Ascending aorta (tissue), 2 donors: ENCODE measurements at regions of chr13 and their contacts with region 1.

Region 1: GRCh38 chr13:97221989-97222700 is at the start of gene MBNL2:
- DNase-seq: peak; percentile 75 to 93
- H3K4me3 ChIP-seq: peak within 1 kb of the TSS; percentile 72 to 78
- H3K27ac ChIP-seq: peak within 1 kb of the TSS; percentile 80 to 83
- H3K4me1 ChIP-seq: peaks cover 0 to 12% of the 10 kb centered on the region in 2 donors
- H3K27me3 ChIP-seq: no peaks in the 10 kb centered on the region
- CTCF ChIP-seq: no peak
- total RNA-seq, gene MBNL2: 38.7 TPM

Region 2: GRCh38 chr13:97109841-97110492 is 112.2 kb before region 1 on chr13:
- intact Hi-C with region 1: loop called (anchors 2 kb)
- DNase-seq: peak; percentile 66 to 96
- H3K4me3 ChIP-seq: peak overlapping the region in 1 of 2 donors; percentile 42
- H3K27ac ChIP-seq: peak overlapping the region; percentile 63 to 69
- H3K4me1 ChIP-seq: peaks cover 8 to 70% of the 10 kb centered on the region in 2 donors
- H3K27me3 ChIP-seq: no peaks in the 10 kb centered on the region
- CTCF ChIP-seq: peak; percentile 95 to 97 (median 96)

Region 3: GRCh38 chr13:97295283-97296182 is 73.4 kb after region 1 on chr13:
- intact Hi-C with region 1: loop called (anchors 5 kb)
- DNase-seq: no peak
- H3K4me3 ChIP-seq: no peak overlapping the region
- H3K27ac ChIP-seq: peak overlapping the region in 1 of 2 donors; percentile 29
- H3K4me1 ChIP-seq: peaks cover 0 to 15% of the 10 kb centered on the region in 2 donors
- H3K27me3 ChIP-seq: no peaks in the 10 kb centered on the region
- CTCF ChIP-seq: no peak

Region 4: DNA sequence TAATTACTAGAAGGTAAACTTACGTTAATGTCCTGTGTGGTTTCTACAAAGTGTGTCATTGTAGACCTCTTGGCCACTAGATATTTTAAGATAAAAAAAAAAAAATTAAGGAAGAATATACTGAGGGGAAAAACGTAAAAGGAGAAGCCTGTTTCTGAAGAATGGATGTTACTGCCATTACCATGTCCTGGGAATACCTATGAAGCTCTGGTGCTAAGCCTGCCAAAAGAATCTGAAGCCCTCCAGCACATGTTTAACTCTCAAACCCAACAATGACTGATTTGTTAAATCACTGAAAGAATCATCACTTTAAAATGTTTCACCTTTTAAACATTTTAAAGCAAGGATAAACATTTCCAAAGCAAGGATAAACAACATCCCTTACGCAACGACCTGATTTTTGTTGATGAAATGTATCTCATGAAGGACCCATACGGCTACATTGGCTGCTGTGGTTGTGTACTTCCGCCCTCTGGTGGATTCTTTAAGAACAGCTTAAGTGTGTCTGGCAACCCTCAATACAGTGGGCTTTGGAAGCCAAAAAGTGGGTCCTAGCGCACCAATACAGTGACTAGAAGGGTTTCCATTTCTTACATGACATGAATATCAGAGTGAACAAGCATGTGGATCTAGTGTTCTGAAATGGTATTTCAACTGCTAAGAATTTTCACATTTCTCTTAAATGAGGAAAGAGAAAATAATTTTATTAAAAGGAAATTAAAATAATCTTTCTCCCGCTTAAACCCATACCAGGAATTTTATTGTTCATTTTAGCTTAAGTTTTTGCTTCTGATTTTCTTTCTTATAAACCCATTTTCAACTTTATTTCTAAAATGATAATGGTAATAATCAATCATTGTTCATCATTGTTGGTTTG is 137.3 kb after region 1 on chr13:
- intact Hi-C with region 1: loop called (anchors 5 kb)
- DNase-seq: no peak
- H3K4me3 ChIP-seq: no peak overlapping the region
- H3K27ac ChIP-seq: no peak overlapping the region
- H3K4me1 ChIP-seq: peaks cover 0 to 18% of the 10 kb centered on the region in 2 donors
- H3K27me3 ChIP-seq: no peaks in the 10 kb centered on the region
- CTCF ChIP-seq: peak; percentile 70 to 90 (median 85)